ENCODE measurements at regions of chr6 and their contacts with region 1.

Region 1: DNA sequence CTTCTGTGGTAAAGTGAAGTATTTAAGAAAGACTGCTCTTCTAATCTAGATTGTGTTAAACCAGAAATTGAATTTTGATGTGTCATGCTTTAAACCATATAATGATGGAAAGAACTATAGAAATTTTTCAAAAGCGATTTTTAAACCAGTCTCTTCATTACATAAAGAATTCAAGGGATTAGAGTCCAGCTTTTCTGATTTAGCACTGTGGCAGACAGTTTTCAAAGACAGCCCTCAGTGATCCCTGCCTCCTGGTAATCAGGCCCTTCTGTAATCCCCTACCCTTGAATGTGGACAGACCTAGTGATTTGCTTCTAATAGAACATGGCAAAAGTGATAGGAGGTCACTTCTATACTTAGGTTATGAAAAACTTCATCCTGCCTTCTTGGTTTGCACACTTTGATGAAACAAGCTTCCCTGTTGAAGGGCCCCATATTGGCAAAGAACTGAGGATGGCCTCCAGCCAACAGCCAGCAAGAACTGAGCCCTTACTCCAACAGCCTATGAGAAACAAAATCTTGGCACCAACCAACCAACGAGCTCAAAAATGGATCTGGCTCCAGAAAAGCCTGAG is 191.4 kb downstream of the DST start:
- DNase-seq: no peak
- H3K4me3 ChIP-seq: no peak overlapping the region
- H3K27ac ChIP-seq: no peak overlapping the region
- H3K4me1 ChIP-seq: no peaks in the 10 kb centered on the region
- H3K27me3 ChIP-seq: no peaks in the 10 kb centered on the region
- CTCF ChIP-seq: no peak

Region 2: DNA sequence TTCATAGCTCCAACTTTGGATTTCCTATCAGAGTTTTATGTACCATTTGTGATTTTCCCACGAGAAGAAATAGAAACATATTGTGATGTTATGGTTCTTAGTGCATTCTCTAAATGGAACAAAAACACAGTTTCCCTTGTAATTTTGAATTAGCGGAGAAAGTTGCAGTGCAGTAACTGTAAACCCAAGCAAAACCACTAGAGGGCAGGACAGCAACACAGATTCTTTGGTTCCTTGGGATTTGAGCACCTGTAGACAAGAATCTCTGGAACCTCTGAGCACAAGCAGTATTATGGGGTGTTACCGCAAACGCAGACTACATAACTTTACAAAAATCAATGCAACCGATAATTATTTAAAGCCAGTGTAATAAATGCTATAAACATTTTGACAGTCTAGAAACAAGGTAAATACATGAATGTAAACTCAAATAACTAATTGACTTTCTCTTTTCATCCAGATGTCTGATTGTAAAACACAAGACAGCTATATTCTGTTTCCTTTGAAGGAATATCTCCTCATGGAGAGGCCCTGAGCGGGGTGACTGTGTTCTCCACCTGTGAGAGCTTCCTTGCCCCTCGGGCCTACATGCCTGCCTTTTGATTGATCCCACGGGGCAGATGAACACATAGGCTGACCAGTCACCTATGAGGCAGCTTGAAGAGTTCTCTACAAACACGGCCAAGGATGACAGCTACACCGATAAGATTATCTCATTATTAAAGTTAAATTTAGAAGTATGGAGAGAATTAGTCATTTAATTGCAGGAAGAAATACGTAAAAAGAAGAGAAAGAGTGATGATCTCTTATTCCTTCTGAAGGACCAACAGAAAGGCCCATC is 136.3 kb before region 1 on chr6:
- CTCF ChIA-PET with region 1: no interaction called
- dilution Hi-C with region 1: no loop called
- in situ Hi-C with region 1: no loop called
- intact Hi-C with region 1: loop called (anchors 10 kb)
- DNase-seq: peak; percentile 41
- H3K4me3 ChIP-seq: no peak overlapping the region
- H3K27ac ChIP-seq: no peak overlapping the region
- H3K4me1 ChIP-seq: no peaks in the 10 kb centered on the region
- H3K27me3 ChIP-seq: no peaks in the 10 kb centered on the region
- CTCF ChIP-seq: peak; percentile 86

Region 3: DNA sequence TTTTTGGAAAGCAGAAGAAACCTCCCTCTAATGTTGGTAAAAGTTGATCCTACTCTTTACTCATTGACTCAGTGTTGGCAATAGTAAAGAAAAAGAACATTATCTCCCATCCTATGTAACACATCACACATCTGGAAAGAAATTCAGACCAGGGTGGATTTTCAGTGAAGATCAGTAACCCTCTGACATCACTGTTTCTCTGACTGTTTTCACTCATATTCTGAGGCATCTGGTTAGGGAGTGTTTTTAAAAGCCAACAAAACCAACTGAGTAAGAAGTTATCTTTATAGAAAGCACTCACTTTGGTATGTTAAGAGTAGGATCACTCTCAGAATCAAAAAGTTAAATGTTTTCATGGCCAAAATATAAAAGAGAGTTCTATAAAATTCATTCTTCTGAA is 47.8 kb after region 1 on chr6:
- CTCF ChIA-PET with region 1: no interaction called
- dilution Hi-C with region 1: no loop called
- in situ Hi-C with region 1: no loop called
- intact Hi-C with region 1: no loop called
- DNase-seq: no peak
- H3K4me3 ChIP-seq: no peak overlapping the region
- H3K27ac ChIP-seq: no peak overlapping the region
- H3K4me1 ChIP-seq: no peaks in the 10 kb centered on the region
- H3K27me3 ChIP-seq: no peaks in the 10 kb centered on the region
- CTCF ChIP-seq: no peak

Measured in mammary epithelial cell (primary cell).